ENCODE measurements at regions of chr1 and their contacts with region 1.

Region 1: DNA sequence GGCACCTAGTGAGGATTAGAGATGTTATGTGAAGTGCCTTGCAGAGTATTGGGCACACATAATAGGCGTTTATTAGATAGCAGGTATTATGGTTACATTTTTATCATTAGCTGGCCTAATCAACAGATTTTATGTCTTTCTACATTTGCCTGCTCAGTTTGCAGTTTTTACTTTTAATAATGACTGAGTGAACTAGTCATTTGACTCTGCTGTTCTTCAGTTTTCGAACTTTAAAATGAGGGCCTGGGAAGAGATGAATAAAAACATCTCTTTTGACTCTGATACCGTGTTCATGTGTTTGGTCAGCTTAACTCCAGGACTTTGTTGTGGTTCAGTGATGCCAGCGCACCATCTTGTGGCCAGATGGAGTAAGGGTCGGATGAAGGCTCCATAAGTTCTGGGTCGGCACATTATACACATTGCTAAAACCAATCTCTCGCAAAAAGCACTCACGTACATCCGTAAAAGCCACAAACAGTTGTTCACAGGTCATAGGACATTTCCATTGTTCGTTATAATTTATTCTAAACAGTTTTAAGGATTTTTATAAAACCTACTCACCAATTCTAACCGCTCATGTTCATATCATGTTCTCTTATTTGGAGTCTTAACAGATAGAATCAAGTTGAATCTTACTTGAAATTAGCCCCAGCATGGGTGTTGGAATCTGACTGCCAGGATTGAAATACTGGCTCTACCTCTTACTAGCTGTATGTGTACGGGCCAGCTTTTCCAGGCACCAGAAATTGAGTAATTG is 78.4 kb upstream of the GPR88 start:
- DNase-seq: peak; percentile 55
- ATAC-seq: peak; percentile 96
- H3K4me3 ChIP-seq: no peak overlapping the region
- H3K27ac ChIP-seq: no peak overlapping the region
- H3K4me1 ChIP-seq: peaks cover 4% of the 10 kb centered on the region; the same call in 1 of the 2 replicates
- H3K27me3 ChIP-seq: no peaks in the 10 kb centered on the region
- CTCF ChIP-seq: peak; percentile 83 to 96 (median 87)
- EP300 ChIP-seq: no peak
- POLR2A ChIP-seq: no peak
- RAD21 ChIP-seq: peak; percentile 98

Region 2: DNA sequence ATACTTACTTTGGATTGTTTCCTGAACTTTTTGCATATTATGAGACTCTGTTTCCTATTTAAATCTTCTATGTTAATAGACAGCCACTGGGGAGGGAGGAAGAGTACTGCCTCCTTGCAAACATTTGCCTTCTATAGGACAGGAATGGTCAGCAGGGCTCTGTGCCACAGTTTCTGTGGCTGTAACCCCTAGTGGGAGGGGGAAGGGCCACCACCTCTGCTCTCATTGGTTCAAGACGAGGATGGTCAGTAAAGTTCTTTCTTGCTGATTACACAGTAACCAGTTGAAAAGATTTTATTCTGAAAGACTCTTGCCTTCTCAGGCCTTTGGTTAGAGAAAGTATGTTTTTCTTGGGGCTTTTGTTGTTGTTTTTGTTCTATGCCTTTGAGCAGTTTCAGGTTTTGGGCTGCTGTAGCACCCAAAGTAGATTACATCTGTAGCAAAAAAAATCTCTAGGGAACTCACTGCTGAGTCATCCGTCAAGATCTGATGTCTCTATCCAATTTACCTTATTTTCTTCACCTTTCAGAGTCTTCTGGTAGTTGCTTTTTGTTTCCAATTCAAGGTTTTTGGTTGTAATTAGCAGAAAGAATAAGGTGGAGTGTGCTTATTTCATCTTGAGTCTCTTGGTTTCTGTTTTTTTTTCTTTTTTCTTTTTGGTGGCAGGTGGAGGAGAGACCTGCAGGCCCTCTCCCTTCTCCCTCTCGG is 466.6 kb before region 1 on chr1:
- CTCF ChIA-PET with region 1: no interaction called
- POLR2A ChIA-PET with region 1: no interaction called
- RAD21 ChIA-PET with region 1: no interaction called
- SMC1A ChIA-PET with region 1: no interaction called
- in situ Hi-C with region 1: no loop called
- intact Hi-C with region 1: no loop called
- DNase-seq: peak; percentile 15
- ATAC-seq: peak; percentile 81
- H3K4me3 ChIP-seq: no peak overlapping the region
- H3K27ac ChIP-seq: no peak overlapping the region
- H3K4me1 ChIP-seq: no peaks in the 10 kb centered on the region
- H3K27me3 ChIP-seq: no peaks in the 10 kb centered on the region
- CTCF ChIP-seq: no peak
- EP300 ChIP-seq: no peak
- POLR2A ChIP-seq: no peak
- RAD21 ChIP-seq: no peak

Region 3: GRCh38 chr1:100132566-100133477 is 326.7 kb before region 1 on chr1 and contains the starts of genes SASS6 and TRMT13:
- CTCF ChIA-PET with region 1: interaction called, 9 read pairs
- POLR2A ChIA-PET with region 1: interaction called, 3 read pairs
- RAD21 ChIA-PET with region 1: interaction called, 4 read pairs
- SMC1A ChIA-PET with region 1: interaction called, 9 read pairs
- in situ Hi-C with region 1: no loop called
- intact Hi-C with region 1: loop called (anchors 10 kb)
- DNase-seq: peak; percentile 90
- ATAC-seq: peak; percentile 91
- H3K4me3 ChIP-seq: peak within 1 kb of the TSS; percentile 99
- H3K27ac ChIP-seq: peak within 1 kb of the TSS; percentile 83
- H3K4me1 ChIP-seq: peaks cover 11% of the 10 kb centered on the region
- H3K27me3 ChIP-seq: no peaks in the 10 kb centered on the region
- CTCF ChIP-seq: no peak
- EP300 ChIP-seq: peak in 1 of 2 experiments; percentile 43; a peak in 1 of 4 replicates
- POLR2A ChIP-seq: peak; percentile 80
- RAD21 ChIP-seq: no peak
- polyA plus RNA-seq, gene SASS6: 8.2 to 10.7 TPM
- polyA plus RNA-seq, gene TRMT13: 17.1 to 22.3 TPM

Region 4: GRCh38 chr1:100351095-100351891 is 108.2 kb before region 1 on chr1:
- CTCF ChIA-PET with region 1: interaction called, 129 read pairs
- POLR2A ChIA-PET with region 1: interaction called, 4 read pairs
- RAD21 ChIA-PET with region 1: interaction called, 23 read pairs
- SMC1A ChIA-PET with region 1: interaction called, 17 read pairs
- in situ Hi-C with region 1: no loop called
- intact Hi-C with region 1: loop called (anchors 5 kb)
- DNase-seq: peak; percentile 82
- ATAC-seq: peak; percentile 70
- H3K4me3 ChIP-seq: peak overlapping the region; percentile 91
- H3K27ac ChIP-seq: peak overlapping the region; percentile 59
- H3K4me1 ChIP-seq: no peaks in the 10 kb centered on the region
- H3K27me3 ChIP-seq: no peaks in the 10 kb centered on the region
- CTCF ChIP-seq: peak; percentile 44 to 55 (median 53); a peak in 5 of 6 replicates
- EP300 ChIP-seq: no peak
- POLR2A ChIP-seq: peak; percentile 44
- RAD21 ChIP-seq: peak; percentile 53

Region 5: GRCh38 chr1:100443811-100444571 is 15.5 kb before region 1 on chr1:
- CTCF ChIA-PET with region 1: interaction called, 61 read pairs
- POLR2A ChIA-PET with region 1: no interaction called
- RAD21 ChIA-PET with region 1: interaction called, 5 read pairs
- SMC1A ChIA-PET with region 1: interaction called, 14 read pairs
- in situ Hi-C with region 1: no loop called
- intact Hi-C with region 1: no loop called
- DNase-seq: peak; percentile 42
- ATAC-seq: peak; percentile 85
- H3K4me3 ChIP-seq: no peak overlapping the region
- H3K27ac ChIP-seq: peak overlapping the region; percentile 45
- H3K4me1 ChIP-seq: peaks cover 18% of the 10 kb centered on the region
- H3K27me3 ChIP-seq: no peaks in the 10 kb centered on the region
- CTCF ChIP-seq: no peak
- EP300 ChIP-seq: no peak
- POLR2A ChIP-seq: no peak
- RAD21 ChIP-seq: no peak; the same call in 1 of the 2 replicates

Region 6: GRCh38 chr1:100494393-100495084 is 35.0 kb after region 1 on chr1:
- CTCF ChIA-PET with region 1: interaction called, 10 read pairs
- POLR2A ChIA-PET with region 1: no interaction called
- RAD21 ChIA-PET with region 1: no interaction called
- SMC1A ChIA-PET with region 1: no interaction called
- in situ Hi-C with region 1: no loop called
- intact Hi-C with region 1: no loop called
- DNase-seq: no peak
- ATAC-seq: no peak
- H3K4me3 ChIP-seq: no peak overlapping the region
- H3K27ac ChIP-seq: no peak overlapping the region
- H3K4me1 ChIP-seq: no peaks in the 10 kb centered on the region
- H3K27me3 ChIP-seq: no peaks in the 10 kb centered on the region
- CTCF ChIP-seq: no peak
- EP300 ChIP-seq: no peak
- POLR2A ChIP-seq: no peak
- RAD21 ChIP-seq: no peak

Region 7: DNA sequence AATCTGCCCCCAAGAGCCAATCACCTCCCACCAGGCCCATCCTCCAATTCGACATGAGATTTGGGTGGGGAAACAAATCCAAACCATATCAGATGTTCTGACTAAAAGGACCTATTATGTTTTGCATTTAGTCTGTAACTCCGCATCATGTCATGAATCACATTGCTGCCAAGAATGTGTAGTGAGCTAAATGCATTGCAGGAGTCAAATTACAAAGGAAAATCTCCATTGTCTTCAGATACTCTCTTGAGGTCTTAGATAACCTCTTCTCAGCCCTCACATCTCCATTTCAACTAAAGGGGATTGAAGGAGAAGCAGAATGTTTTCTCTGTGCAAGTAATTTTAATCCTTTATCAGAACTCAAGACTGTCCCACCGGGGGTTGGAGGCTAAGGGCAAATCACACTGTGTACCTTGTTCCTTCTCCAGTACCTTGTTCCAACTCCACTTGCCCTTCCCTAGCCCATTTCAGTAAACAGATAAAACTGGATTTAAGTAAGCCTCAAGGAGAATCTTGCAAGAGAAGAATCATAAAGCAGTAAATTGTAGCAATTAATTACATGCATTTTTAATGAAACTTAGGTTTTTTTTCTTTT is 401.0 kb after region 1 on chr1:
- CTCF ChIA-PET with region 1: interaction called, 261 read pairs
- POLR2A ChIA-PET with region 1: no interaction called
- RAD21 ChIA-PET with region 1: interaction called, 9 read pairs
- SMC1A ChIA-PET with region 1: interaction called, 14 read pairs
- in situ Hi-C with region 1: no loop called
- intact Hi-C with region 1: no loop called
- DNase-seq: no peak
- ATAC-seq: no peak
- H3K4me3 ChIP-seq: no peak overlapping the region
- H3K27ac ChIP-seq: no peak overlapping the region
- H3K4me1 ChIP-seq: no peaks in the 10 kb centered on the region
- H3K27me3 ChIP-seq: peaks cover 0 to 5% of the 10 kb centered on the region in 2 experiments; a peak in 1 of 4 replicates
- CTCF ChIP-seq: no peak
- EP300 ChIP-seq: no peak
- POLR2A ChIP-seq: no peak
- RAD21 ChIP-seq: no peak